Aorta (tissue), 5 donors: ENCODE measurements at regions of chr17 and their contacts with region 1.

Region 1: GRCh38 chr17:34254651-34255380 is at the start of gene CCL2:
- DNase-seq: peak; percentile 82 to 85
- ATAC-seq: peak; percentile 72
- H3K4me3 ChIP-seq: peak within 1 kb of the TSS; percentile 32 to 42
- H3K27ac ChIP-seq: peak within 1 kb of the TSS; percentile 52 to 98
- H3K4me1 ChIP-seq: peaks cover 10 to 31% of the 10 kb centered on the region in 2 donors
- H3K27me3 ChIP-seq: no peaks in the 10 kb centered on the region
- total RNA-seq, gene CCL2: 114 to 237 TPM

Region 2: DNA sequence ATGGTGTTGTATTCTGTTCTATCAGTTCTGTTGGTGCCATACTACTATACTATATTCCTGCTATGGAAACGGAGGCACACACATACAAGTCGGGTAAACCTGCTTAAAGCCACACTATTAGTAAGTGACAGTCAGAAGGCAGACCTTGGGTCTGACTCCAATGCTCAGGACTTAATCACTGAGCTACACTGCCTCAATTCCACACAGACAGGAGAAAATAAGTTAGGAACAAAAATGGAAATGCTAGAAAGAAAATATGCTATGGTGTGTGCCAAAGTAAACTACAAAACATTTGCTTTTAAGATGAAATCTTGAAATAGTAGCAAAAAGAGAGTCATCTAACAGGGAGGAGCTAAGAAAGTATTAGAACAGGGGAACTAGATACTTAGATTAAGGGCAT is 1426.0 kb before region 1 on chr17:
- intact Hi-C with region 1: loop called in 1 of 2 experiments (anchors 10 kb)
- DNase-seq: no peak
- ATAC-seq: no peak
- H3K4me3 ChIP-seq: no peak overlapping the region
- H3K27ac ChIP-seq: peak overlapping the region; percentile 82 to 94
- H3K4me1 ChIP-seq: peaks cover 6 to 8% of the 10 kb centered on the region in 2 donors
- H3K27me3 ChIP-seq: no peaks in the 10 kb centered on the region

Region 3: DNA sequence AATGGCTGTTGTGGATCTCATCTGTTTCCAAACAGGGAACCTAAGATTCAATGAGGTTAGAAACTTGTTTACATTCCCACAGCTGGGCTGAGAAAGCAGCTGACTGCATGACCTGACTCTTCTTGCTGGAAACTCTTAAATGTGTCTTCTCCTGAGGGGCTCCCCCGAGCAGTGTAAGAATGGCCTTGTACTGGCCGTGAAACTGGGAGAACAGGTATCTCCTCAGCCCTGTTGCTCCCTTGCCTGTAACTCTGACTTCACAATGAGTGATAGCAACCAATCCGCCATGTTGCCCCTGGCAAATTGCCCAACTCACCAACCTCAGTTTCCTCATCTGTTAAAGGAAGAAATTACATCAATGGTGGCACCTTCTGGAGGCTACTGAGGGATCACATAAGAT is 58.8 kb before region 1 on chr17:
- intact Hi-C with region 1: no loop called
- DNase-seq: no peak
- ATAC-seq: no peak
- H3K4me3 ChIP-seq: no peak overlapping the region
- H3K27ac ChIP-seq: no peak overlapping the region
- H3K4me1 ChIP-seq: no peaks in the 10 kb centered on the region
- H3K27me3 ChIP-seq: no peaks in the 10 kb centered on the region

Region 4: DNA sequence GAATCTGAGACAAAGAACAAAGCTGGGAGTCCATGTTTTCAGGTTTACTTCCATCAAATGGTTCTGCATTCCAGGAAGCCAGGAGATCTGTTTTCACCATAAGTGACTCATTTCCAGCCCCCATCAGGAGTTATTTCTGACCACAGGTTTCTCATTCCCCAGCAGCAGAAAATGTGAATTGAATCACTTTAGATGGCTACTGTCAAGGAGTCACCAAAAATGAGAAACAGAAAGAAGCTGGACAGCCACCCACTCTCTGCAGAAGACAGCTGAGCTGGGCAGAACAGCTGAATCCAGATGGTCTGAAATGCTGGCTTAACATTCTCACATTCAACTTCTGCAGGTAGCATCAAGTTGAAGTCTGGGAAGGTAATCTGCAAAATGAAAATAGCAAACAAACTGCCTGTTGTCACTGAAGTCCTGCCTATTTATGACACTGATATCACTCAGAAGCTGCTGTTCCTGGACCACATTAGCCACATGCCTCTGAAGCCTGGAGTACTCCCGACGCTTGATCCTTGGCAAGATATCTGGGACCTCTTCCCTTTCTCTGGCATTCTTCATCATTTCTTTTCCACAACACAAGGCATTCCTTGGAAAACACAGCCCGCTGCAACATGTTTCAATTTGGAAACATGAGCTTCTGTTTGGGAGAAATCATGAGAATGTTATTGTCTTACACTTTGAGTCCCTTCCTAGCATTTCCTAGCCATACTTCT is 46.0 kb after region 1 on chr17:
- intact Hi-C with region 1: loop called in 1 of 2 experiments (anchors 5 kb)
- DNase-seq: no peak
- ATAC-seq: no peak
- H3K4me3 ChIP-seq: no peak overlapping the region
- H3K27ac ChIP-seq: no peak overlapping the region
- H3K4me1 ChIP-seq: no peaks in the 10 kb centered on the region
- H3K27me3 ChIP-seq: peaks cover 0 to 4% of the 10 kb centered on the region in 2 donors